ENCODE measurements at regions of chr2 and their contacts with region 1.

Region 1: DNA sequence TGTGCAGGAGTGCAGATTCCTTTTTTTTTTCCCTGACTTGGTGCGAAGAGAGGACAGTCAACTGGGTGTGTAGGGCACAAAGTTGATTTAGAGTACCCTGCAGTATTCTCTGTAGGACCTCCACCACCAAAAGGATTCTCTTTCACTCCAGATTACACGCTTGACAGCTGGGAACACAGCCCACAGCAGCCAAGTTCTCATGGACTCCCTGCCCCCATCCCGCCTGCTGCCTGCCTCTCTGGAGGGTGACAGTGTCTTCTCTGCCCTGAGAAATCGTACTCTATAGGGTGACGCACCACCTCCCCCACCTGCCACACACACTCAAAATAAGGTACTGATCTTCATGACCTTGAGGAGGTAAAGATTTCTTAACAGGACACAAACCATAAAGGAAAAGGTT is 26.6 kb upstream of the IHH start:
- DNase-seq: no peak

Region 2: DNA sequence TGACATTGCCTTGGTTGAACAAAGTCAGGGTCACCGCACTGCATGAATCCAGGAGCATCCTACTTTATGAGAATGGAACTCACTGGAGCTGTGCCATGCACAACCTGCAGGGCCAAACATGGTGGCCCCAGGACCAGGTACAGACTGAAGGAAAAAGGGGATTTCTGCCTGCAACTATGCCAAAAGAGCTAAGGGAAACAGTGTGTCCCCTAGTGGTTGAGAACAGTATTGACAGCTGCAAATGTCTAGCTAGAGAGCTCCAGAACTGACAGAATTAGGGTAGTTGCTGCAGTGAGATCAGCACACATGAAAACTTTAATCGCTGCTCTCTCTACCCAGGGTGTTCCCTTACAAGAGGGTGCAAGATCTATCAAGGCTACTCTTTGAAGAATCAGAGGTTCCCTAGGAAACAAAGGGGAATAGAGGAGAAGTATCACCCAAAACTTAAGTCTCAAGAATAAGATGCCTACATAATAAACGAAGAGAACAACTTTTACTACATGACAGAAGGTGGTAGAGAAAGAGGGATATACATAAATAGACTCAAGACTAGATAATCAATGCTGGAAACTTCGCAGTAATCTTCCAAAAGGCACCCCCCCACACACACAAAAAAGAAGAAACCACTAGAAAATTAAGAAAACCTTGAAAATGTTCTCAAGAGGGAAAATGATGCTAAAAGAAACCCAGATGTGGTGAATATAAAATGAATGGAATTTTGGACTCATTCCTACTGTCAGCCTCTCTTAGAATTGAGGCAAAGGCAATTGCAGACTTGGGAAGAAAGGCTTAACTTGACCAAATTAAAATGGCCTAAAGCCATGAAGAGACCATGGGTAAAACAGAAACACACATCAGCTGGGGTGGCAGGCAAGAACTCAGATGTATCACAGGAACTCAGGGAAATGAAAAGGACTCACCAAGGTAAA is 17.0 kb after region 1 on chr2:
- CTCF ChIA-PET with region 1: interaction called, 11 read pairs
- POLR2A ChIA-PET with region 1: no interaction called
- DNase-seq: peak; percentile 63

Measured in HEK293T (cell line).